ENCODE measurements at regions of chr19 and their contacts with region 1.

Region 1: GRCh38 chr19:14006243-14006765 is at the start of gene RFX1:
- DNase-seq: peak; percentile 100
- H3K4me3 Mint-ChIP-seq: peak within 1 kb of the TSS; percentile 96
- H3K27ac Mint-ChIP-seq: peak within 1 kb of the TSS; percentile 100
- H3K4me1 Mint-ChIP-seq: peaks cover 39% of the 10 kb centered on the region
- H3K27me3 Mint-ChIP-seq: no peaks in the 10 kb centered on the region
- total RNA-seq, gene RFX1: 17.0 and 18.0 TPM in 2 replicates

Region 2: GRCh38 chr19:13952154-13953035 is 53.9 kb before region 1 on chr19 and contains the start of gene DCAF15:
- intact Hi-C with region 1: loop called (anchors 1 kb)
- DNase-seq: peak; percentile 100
- H3K4me3 Mint-ChIP-seq: peak within 1 kb of the TSS; percentile 99
- H3K27ac Mint-ChIP-seq: peak within 1 kb of the TSS; percentile 97
- H3K4me1 Mint-ChIP-seq: peaks cover 14% of the 10 kb centered on the region
- H3K27me3 Mint-ChIP-seq: peaks cover 4% of the 10 kb centered on the region
- total RNA-seq, gene DCAF15: 61.5 and 63.2 TPM in 2 replicates

Region 3: DNA sequence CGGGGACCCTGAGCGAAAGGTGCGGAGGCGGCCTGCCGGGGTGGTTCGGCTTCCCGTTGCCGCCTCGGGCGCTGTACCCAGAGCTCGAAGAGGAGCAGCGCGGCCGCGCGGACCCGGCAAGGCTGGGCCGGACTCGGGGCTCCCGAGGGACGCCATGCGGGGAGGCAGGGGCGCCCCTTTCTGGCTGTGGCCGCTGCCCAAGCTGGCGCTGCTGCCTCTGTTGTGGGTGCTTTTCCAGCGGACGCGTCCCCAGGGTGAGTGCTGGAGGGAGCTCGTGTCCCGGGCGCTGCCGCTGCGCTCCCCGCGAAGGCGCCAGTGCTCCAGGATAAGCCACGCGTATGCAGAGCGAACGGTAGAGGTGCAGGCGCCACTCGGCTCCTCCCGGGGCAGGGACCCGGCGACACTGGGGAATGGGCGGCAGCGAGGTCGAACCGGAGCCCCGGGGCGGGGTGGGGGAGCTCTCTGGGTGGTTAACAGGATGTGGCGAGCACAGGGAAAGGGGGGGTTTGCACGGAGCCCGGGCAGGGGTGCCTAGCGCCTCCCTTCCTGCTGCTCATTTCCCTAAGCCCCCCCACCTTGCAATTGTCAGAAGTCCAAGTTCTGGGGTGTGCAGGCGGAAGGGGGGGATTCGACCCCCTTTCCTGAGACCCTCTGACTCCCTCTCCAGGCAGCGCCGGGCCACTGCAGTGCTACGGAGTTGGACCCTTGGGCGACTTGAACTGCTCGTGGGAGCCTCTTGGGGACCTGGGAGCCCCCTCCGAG is 25.6 kb after region 1 on chr19 and contains the start of gene IL27RA:
- intact Hi-C with region 1: loop called (anchors 1 kb)
- DNase-seq: peak; percentile 95
- H3K4me3 Mint-ChIP-seq: peak within 1 kb of the TSS; percentile 97
- H3K27ac Mint-ChIP-seq: peak within 1 kb of the TSS; percentile 95
- H3K4me1 Mint-ChIP-seq: peaks cover 18% of the 10 kb centered on the region
- H3K27me3 Mint-ChIP-seq: peaks cover 7% of the 10 kb centered on the region
- total RNA-seq, gene IL27RA: 81.6 and 86.4 TPM in 2 replicates

Region 4: DNA sequence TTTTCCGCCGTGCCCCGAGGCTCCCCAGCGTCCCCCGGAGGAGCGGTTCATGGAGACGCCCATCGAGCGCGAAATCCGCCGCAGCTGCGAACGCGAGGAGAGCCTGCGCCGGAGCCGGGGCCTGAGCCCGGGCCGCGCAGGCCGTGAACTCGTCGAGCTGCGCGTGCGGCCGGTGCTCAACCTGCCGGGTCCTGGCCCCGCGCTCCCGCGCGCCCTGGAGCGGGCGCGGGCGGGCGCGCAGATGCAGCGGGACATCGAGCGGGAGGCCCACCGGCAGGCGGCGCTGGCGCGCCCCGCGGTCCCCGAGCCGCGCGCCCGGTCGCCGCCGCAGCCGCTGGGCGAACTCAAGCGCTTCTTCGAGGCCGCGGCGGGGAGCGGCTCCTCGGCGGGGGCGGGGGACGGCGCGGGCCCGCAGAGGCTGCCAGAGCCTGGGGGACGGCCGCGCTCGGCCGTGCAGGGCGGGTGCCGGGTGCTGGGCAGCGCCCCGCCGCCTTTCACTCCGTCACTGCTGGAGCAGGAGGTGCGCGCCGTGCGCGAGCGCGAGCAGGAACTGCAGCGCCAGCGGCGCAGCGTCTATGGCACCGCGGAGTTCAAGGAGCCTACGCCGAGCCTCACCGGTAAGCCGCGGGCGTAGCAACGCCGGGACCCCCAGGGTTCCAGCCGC is 67.1 kb after region 1 on chr19:
- intact Hi-C with region 1: loop called (anchors 2 kb)
- DNase-seq: peak; percentile 94
- H3K4me3 Mint-ChIP-seq: peak overlapping the region; percentile 99
- H3K27ac Mint-ChIP-seq: peak overlapping the region; percentile 99
- H3K4me1 Mint-ChIP-seq: peaks cover 16% of the 10 kb centered on the region
- H3K27me3 Mint-ChIP-seq: peaks cover 6% of the 10 kb centered on the region

Measured in activated CD4-positive, alpha-beta T cell treated with anti-CD3 and anti-CD28 coated beads, Interleukin-2, amount 10 ng/mL, durations not matched to agents 24 days and 14 days (primary cell).